ENCODE measurements at regions of chrX and their contacts with region 1.

Region 1: DNA sequence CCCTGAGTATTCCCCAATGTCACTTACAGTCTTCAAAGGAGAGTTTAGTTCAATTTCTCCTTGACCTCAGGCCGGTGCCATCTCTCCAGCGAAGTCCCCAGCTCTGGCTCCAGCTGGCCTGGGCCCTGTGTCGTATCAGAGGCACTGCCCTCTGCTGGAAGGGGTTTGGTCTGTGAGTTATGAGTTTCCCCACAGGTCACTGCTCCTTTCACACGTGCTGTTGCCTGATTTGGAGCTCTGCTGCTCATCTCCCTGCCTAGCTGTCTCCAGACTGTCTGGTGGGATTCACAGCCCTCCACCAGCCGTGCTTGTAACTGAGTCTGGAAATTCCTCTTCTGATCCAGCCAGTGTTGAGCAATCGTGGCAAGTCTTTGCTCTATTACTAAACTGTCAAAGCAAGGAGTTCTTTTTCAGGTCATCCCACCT is at the start of gene RAP2C:
- DNase-seq: peak; percentile 62 to 87
- ATAC-seq: peak; percentile 80 to 86
- H3K4me3 ChIP-seq: peak within 1 kb of the TSS; percentile 59 to 86 (median 72)
- H3K27ac ChIP-seq: peak within 1 kb of the TSS; percentile 94 to 96 (median 94)
- H3K4me1 ChIP-seq: peaks cover 10 to 24% of the 10 kb centered on the region in 2 donors
- H3K27me3 ChIP-seq: no peaks in the 10 kb centered on the region
- CTCF ChIP-seq: peak in 4 of 5 experiments; percentile 46 to 60 (median 53)
- POLR2A ChIP-seq: peak; percentile 63 to 66
- total RNA-seq, gene RAP2C: 9.4 to 13.8 (median 13.6) TPM

Region 2: DNA sequence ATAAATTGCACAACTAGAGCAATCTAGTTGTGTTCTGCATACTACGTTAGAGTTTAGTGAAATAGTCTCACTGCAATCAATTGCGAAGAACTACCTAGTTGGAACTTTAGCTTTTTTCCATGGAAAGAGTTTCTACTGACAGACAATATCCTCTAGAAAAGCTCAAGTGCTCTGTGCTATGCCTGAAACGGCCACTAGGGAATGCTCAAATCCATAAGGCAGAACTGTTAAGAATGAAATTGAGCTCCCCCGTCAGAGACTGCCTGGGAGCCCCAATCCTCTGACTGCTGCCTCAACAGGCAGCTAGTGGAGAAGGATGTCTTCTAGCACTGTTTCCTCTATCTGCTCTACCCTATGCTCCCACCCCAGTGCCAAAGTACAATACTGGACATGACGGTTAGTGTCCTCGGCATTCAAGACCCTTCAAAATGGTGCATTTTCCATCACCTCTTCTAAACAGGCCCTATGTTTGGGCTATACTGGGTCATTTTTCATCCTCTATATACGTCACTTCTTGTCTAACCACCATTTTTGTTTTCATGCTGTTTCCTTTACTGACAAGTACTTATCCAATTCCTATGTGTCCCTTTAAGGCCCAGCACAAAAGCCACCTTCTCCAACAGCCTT is 126.8 kb before region 1 on chrX:
- in situ Hi-C with region 1: loop called in 1 of 4 experiments (anchors 25 kb)
- intact Hi-C with region 1: loop called (anchors 2 kb)
- DNase-seq: peak; percentile 3 to 28
- ATAC-seq: peak; percentile 42 to 85
- H3K4me3 ChIP-seq: no peak overlapping the region
- H3K27ac ChIP-seq: no peak overlapping the region
- H3K4me1 ChIP-seq: no peaks in the 10 kb centered on the region
- H3K27me3 ChIP-seq: no peaks in the 10 kb centered on the region
- CTCF ChIP-seq: peak; percentile 54 to 73 (median 62)
- POLR2A ChIP-seq: no peak

Region 3: GRCh38 chrX:132353430-132353829 is 134.1 kb after region 1 on chrX:
- in situ Hi-C with region 1: no loop called
- intact Hi-C with region 1: no loop called
- DNase-seq: no peak
- ATAC-seq: no peak
- H3K4me3 ChIP-seq: no peak overlapping the region
- H3K27ac ChIP-seq: no peak overlapping the region
- H3K4me1 ChIP-seq: no peaks in the 10 kb centered on the region
- H3K27me3 ChIP-seq: no peaks in the 10 kb centered on the region
- CTCF ChIP-seq: no peak
- POLR2A ChIP-seq: no peak

Region 4: DNA sequence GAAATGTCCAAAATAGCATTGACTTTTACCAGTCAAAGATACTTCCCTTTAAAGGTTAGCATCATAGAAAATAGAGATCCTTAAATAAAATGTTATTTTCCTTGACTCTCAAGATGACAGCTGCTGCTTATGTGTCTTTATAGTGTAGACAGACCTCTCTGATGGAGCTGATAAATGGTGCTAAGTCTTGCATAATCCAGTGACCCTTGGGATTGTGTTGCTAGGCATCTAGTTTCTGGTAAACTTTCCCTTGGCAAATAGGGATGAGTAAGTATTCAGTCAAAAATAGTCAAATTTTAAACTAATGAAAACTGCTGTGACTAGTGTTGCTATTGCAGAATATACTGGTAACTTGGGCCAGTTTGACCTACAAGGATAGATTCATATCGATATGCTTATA is 215.9 kb after region 1 on chrX:
- in situ Hi-C with region 1: no loop called
- intact Hi-C with region 1: no loop called
- DNase-seq: peak in 1 of 2 donors; percentile 1
- ATAC-seq: no peak
- H3K4me3 ChIP-seq: no peak overlapping the region
- H3K27ac ChIP-seq: no peak overlapping the region
- H3K4me1 ChIP-seq: no peaks in the 10 kb centered on the region
- H3K27me3 ChIP-seq: no peaks in the 10 kb centered on the region
- CTCF ChIP-seq: no peak
- POLR2A ChIP-seq: no peak

Measured in gastrocnemius medialis (tissue), 4 donors.